ENCODE measurements at regions of chr20 and their contacts with region 1.

Region 1: DNA sequence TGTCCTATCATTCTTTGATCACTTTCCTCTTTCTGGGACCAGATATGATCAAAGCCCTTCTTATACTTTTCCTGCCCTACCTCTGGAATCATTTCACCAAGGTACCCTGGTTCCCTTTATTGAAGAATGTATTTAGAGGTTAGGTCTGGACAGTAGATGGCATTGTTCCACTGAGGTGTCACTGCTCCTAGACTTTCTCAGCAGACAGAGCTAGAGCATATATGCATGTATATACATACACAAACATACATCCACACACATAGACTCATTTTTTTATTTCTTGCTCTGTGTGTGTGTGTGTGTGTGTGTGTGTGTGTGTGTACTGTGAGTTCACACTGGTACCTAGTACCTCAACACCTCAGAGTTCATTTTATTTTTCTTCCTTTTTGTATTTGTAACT is 40.9 kb downstream of the PTPRA start:
- DNase-seq: no peak
- ATAC-seq: peak; percentile 39
- H3K4me3 Mint-ChIP-seq: no peak overlapping the region
- H3K27ac Mint-ChIP-seq: no peak overlapping the region
- H3K4me1 Mint-ChIP-seq: peaks cover 18% of the 10 kb centered on the region
- H3K27me3 Mint-ChIP-seq: no peaks in the 10 kb centered on the region
- CTCF ChIP-seq: no peak

Region 2: DNA sequence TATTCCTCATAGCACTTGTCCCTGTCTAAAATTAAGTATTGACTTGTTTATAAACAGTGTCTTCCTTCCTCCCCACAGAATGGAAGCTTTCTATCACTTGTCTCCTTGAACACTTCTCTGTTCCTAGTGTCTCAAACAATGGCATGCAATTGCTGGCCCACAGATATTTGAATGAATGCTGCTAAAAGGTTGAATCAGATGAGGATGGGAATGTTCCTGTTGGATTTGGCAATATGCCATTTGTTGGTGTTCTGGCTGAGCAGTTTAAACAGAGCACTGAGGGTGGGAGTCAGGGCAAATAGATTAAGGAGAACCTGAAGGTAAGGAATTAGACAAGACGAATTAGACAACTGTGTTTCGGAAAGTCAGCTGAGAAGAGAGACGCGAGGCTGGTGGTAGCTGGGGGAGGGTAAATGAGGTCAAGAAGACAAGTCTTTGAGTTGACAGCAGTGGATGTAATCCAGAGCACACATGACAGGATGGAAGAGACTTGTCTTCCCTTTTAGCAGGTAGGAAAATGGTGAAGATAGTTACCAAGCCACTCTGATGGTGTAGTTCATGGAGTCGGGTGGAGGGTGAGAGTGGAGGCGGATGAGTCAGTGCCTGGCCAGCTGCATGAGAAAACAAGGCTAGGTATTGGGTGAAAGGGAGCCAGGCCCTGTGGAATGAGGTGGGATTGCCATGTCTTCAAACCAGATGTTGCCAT is 70.9 kb after region 1 on chr20:
- CTCF ChIA-PET with region 1: interaction called, 3 read pairs
- POLR2A ChIA-PET with region 1: no interaction called
- intact Hi-C with region 1: loop called (anchors 10 kb)
- DNase-seq: peak; percentile 72
- ATAC-seq: no peak
- H3K4me3 Mint-ChIP-seq: no peak overlapping the region
- H3K27ac Mint-ChIP-seq: no peak overlapping the region
- H3K4me1 Mint-ChIP-seq: peaks cover 19% of the 10 kb centered on the region
- H3K27me3 Mint-ChIP-seq: no peaks in the 10 kb centered on the region
- CTCF ChIP-seq: no peak

Region 3: DNA sequence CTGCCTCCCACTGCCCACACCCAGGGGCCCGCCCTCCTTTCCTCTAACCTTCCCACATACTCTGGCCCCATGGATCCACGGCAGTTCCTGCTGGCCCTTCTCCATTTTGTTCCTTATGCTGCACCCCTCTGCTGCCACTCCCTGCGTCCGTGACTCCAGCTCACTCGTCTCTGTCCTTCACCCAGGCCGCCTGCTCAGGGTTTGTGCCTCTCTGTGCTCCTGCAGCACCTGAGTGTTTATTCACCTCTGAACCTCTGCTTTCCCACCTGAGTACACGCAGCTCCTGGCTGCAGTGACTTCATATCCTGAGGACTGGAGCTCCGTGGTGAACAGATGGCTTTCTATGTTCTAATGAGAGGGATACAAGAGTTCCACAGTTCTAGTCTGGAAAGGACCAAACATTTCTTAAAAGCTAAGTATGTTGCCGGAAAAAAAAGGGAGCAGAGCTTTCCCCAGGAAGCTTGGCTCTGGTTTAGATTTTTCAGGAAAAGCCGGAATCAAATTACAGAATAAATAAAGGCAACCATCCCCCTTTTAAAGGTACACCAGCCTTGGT is 127.8 kb after region 1 on chr20:
- CTCF ChIA-PET with region 1: no interaction called
- POLR2A ChIA-PET with region 1: no interaction called
- intact Hi-C with region 1: no loop called
- DNase-seq: no peak
- ATAC-seq: no peak
- H3K4me3 Mint-ChIP-seq: no peak overlapping the region
- H3K27ac Mint-ChIP-seq: no peak overlapping the region
- H3K4me1 Mint-ChIP-seq: peaks cover 8% of the 10 kb centered on the region
- H3K27me3 Mint-ChIP-seq: no peaks in the 10 kb centered on the region
- CTCF ChIP-seq: no peak

Region 4: GRCh38 chr20:3106658-3107463 is 192.7 kb after region 1 on chr20:
- CTCF ChIA-PET with region 1: no interaction called
- POLR2A ChIA-PET with region 1: no interaction called
- intact Hi-C with region 1: no loop called
- DNase-seq: no peak
- ATAC-seq: no peak
- H3K4me3 Mint-ChIP-seq: no peak overlapping the region
- H3K27ac Mint-ChIP-seq: no peak overlapping the region
- H3K4me1 Mint-ChIP-seq: peaks cover 13% of the 10 kb centered on the region
- H3K27me3 Mint-ChIP-seq: no peaks in the 10 kb centered on the region
- CTCF ChIP-seq: no peak

Measured in activated CD8-positive, alpha-beta T cell treated with anti-CD3 and anti-CD28 coated beads for 36 hours (primary cell).